Endothelial cell of umbilical vein (primary cell): ENCODE measurements at regions of chr15 and their contacts with region 1.

Region 1: GRCh38 chr15:85667491-85668424 is 127.0 kb downstream of the KLHL25 start:
- DNase-seq: peak; percentile 99
- H3K4me3 ChIP-seq: peak overlapping the region in 1 of 3 experiments; percentile 10
- H3K27ac ChIP-seq: peak overlapping the region; percentile 96
- H3K4me1 ChIP-seq: peaks cover 18% of the 10 kb centered on the region
- H3K27me3 ChIP-seq: no peaks in the 10 kb centered on the region
- CTCF ChIP-seq: no peak
- POLR2A ChIP-seq: no peak

Region 2: GRCh38 chr15:85592148-85592547 is 75.6 kb before region 1 on chr15:
- CTCF ChIA-PET with region 1: interaction called, 17 read pairs
- POLR2A ChIA-PET with region 1: no interaction called
- dilution Hi-C with region 1: no loop called
- intact Hi-C with region 1: loop called (anchors 1 kb)
- DNase-seq: peak; percentile 93
- H3K4me3 ChIP-seq: no peak overlapping the region
- H3K27ac ChIP-seq: peak overlapping the region; percentile 60
- H3K4me1 ChIP-seq: peaks cover 11% of the 10 kb centered on the region
- H3K27me3 ChIP-seq: no peaks in the 10 kb centered on the region
- CTCF ChIP-seq: peak in 1 of 2 donors; percentile 23
- POLR2A ChIP-seq: no peak

Region 3: GRCh38 chr15:85618956-85619491 is 48.7 kb before region 1 on chr15:
- CTCF ChIA-PET with region 1: interaction called, 9 read pairs
- POLR2A ChIA-PET with region 1: no interaction called
- dilution Hi-C with region 1: no loop called
- intact Hi-C with region 1: loop called (anchors 1 kb)
- DNase-seq: peak; percentile 96
- H3K4me3 ChIP-seq: peak overlapping the region; percentile 26 to 80 (median 45)
- H3K27ac ChIP-seq: peak overlapping the region; percentile 78
- H3K4me1 ChIP-seq: peaks cover 47% of the 10 kb centered on the region
- H3K27me3 ChIP-seq: no peaks in the 10 kb centered on the region
- CTCF ChIP-seq: no peak
- POLR2A ChIP-seq: no peak

Region 4: DNA sequence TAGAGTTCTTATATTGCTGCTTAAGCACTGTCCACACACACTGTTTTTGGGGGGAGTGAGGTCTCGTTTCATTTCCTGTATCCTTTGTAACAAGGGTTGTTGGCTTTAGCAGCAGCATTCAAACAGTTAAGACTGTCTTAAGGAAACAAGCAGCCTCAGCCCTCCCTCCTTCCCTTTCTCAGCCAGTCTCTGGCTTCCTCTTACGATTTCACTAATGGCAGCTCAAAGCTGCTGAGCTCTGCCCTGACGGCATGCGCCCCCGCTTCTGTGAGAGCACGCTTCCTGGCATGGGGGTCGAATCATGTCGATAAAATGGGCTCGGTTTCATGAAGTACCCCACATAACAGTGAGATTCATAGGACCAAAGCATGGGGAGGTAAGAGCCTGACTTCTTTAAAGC is 22.0 kb after region 1 on chr15:
- CTCF ChIA-PET with region 1: interaction called, 3 read pairs
- POLR2A ChIA-PET with region 1: no interaction called
- dilution Hi-C with region 1: no loop called
- intact Hi-C with region 1: loop called (anchors 1 kb)
- DNase-seq: peak; percentile 85
- H3K4me3 ChIP-seq: peak overlapping the region in 2 of 3 experiments; percentile 17 to 53
- H3K27ac ChIP-seq: peak overlapping the region; percentile 82
- H3K4me1 ChIP-seq: peaks cover 32% of the 10 kb centered on the region
- H3K27me3 ChIP-seq: no peaks in the 10 kb centered on the region
- CTCF ChIP-seq: no peak
- POLR2A ChIP-seq: no peak

Region 5: DNA sequence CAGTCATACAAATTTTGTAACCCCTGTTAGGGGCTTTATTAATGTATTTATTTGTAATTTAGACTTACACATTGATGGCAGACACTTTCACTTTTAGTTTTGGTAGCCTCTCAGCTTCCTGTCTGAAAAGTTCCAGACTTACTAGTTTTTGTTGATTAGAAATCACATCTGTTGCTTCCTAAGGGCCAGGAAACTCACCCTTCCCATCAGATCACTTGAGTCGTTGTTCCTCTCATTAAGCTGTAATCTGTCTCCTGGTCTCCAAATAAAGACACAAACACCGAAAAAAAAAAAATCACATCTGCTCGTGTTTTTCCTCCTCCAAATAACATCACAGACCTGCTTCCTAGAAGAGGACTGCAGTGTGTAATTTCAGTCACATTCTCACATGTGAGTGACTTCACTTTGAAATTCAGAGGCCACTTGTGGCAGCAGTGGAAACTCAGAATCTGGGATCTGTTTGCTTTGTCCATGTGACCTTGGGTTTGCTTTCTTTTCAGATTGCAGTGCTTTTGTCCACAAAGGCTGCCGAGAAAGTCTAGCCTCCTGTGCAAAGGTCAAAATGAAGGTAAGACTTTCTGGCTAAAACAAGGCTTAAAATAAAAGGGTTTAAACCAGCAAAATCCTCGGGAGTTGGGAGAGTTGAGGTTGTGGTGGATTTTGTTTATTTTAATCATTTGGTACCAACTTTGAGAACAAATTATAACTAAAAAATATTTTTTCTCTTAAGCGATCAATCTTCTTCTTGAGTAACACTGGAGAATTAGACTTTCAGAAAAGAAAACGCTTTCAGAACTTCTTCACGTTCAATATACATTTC is 40.0 kb after region 1 on chr15:
- CTCF ChIA-PET with region 1: no interaction called
- POLR2A ChIA-PET with region 1: no interaction called
- dilution Hi-C with region 1: no loop called
- intact Hi-C with region 1: loop called (anchors 1 kb)
- DNase-seq: peak; percentile 88
- H3K4me3 ChIP-seq: peak overlapping the region in 2 of 3 experiments; percentile 5 to 51
- H3K27ac ChIP-seq: peak overlapping the region; percentile 92
- H3K4me1 ChIP-seq: peaks cover 18% of the 10 kb centered on the region
- H3K27me3 ChIP-seq: no peaks in the 10 kb centered on the region
- CTCF ChIP-seq: no peak
- POLR2A ChIP-seq: no peak

Region 6: DNA sequence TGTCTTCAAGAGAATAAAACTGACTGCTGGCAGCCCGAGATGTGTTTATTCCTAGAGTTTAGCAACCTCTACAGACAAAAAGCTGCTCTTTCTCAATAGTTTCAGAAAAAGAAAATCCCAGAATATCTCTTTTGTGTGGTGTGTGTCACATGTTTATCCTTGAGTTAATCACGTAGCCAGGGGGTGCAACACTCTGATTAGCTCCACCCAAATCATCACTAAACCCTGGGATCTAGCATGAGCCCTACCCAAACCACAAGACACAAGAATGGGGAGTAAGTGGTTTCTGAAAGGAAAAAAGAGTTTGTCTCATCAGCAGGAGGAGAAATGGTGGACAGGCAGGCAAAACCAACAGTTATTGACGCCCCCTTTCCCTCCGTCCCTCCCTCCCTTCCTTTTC is 333.4 kb after region 1 on chr15:
- CTCF ChIA-PET with region 1: no interaction called
- POLR2A ChIA-PET with region 1: no interaction called
- dilution Hi-C with region 1: no loop called
- intact Hi-C with region 1: no loop called
- DNase-seq: no peak
- H3K4me3 ChIP-seq: no peak overlapping the region
- H3K27ac ChIP-seq: no peak overlapping the region
- H3K4me1 ChIP-seq: no peaks in the 10 kb centered on the region
- H3K27me3 ChIP-seq: no peaks in the 10 kb centered on the region
- CTCF ChIP-seq: no peak
- POLR2A ChIP-seq: no peak